Posterior vena cava (tissue), 2 donors: ENCODE measurements at regions of chr6 and their contacts with region 1.

Region 1: DNA sequence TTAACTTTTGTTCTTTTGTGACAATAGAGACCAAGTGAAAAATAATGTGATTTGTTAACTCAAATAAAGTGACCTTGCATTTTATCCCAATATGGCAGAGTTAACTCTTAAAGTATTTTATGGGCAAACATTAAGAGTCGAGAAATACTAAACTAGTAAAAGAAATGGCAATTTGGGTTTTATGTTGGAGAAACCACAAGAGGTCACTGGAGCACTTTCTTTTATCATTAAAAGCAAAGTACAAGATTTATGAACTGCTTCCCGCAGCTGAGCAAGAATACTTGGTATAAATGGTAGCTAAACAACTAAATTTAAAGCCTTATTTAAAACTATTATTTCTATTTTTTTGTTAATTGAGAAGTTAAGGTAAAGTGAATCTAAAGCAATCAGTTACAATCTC is 33.5 kb upstream of the MCM9 start:
- DNase-seq: no peak

Region 2: DNA sequence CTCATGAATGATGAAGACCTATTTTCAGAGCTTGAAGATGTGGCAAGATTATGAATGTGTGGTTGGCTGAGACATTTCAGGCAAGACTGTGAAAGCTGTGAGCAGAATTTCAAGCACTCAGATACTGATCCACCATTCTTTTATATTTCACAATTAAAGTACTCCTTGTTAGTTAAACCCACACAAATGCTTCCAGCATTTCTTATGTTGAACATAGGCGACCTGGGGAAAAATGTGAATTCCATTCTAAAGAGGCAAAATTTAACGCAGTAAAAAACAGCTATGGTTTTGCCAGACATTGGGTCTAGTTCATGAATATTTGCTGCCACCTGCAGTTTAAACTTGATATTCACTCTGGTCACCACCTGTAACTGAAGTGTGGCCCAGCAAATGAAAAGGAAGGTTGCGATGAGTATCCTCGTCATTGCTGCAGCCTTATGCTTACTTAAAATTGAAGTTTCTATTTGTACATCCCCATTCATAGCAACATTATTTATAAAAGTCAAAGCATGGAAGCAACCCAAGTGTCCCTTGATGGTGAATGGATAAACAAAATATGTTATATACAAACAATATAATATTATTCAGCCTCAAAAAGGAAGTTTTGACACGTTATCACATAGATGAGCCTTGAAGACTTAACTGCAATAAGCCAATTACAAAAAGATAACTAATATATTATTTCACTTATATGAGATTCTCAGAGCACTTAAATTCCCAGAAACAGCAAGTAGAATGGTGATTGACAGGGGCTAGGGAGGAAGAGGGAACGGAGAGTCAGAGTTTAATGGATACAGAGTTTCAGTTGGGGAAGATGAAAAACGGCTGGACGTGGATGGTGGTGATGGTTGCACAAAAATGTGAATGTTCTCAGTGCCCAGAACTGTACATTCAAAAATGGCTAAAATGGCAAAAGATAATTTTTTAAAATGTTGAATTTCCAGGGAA is 142.5 kb after region 1 on chr6:
- intact Hi-C with region 1: loop called (anchors 5 kb)
- DNase-seq: no peak

Region 3: GRCh38 chr6:119215885-119216590 is 247.6 kb after region 1 on chr6:
- intact Hi-C with region 1: no loop called
- DNase-seq: no peak